ENCODE measurements at regions of chr22 and their contacts with region 1.

Region 1: DNA sequence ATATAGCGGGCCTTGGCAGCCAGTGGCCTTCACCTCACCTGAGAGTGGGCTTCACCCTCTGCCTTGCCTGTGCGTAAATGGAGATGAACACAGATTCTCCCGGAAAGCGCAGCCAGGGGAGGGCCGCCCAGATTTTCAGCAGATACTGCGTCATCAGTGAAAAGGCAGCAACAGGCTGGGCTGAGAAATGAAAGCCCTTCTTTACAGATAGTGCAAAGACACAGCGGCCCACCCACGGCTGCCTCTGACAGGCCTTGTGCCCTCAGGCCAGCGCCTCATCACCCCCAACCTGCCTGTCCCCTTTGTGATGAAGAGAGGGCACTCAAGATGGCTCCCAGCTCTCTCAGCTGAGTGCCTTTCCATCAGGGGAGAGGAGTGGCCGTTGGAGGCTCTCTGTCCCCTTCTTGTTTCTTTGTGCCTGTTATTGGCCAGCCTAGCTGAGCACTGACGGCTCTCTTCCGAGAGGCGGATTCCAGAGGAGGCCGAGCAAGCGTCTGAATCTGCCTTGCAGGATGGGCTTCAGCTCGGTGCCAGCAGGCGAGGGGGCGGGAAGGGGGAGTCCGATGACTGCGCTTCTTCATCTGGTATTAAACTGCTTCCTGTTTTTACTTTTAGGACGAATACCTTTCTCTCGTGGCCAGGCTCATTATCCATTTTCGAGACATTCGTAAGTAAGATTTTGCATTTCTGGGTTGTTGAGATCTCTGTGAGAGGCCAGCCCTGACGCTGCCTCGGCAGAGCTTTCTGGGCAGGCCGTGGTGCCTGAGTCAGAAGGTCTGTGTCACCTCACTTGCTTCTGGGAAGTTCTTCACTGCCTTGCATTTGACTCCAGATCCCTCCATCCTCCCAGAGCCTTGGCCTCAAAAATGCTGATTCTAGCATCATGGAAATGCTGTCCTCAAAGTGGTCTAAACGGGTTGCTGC is 43.7 kb downstream of the MED15 start:
- DNase-seq: peak; percentile 18
- H3K4me3 Mint-ChIP-seq: peak overlapping the region; percentile 54
- H3K27ac Mint-ChIP-seq: peak overlapping the region; percentile 94
- H3K4me1 Mint-ChIP-seq: peaks cover 66% of the 10 kb centered on the region
- H3K27me3 Mint-ChIP-seq: no peaks in the 10 kb centered on the region

Region 2: GRCh38 chr22:20523086-20523983 is 27.7 kb before region 1 on chr22:
- intact Hi-C with region 1: loop called (anchors 2 kb)
- DNase-seq: no peak
- H3K4me3 Mint-ChIP-seq: peak overlapping the region; percentile 24
- H3K27ac Mint-ChIP-seq: peak overlapping the region; percentile 77
- H3K4me1 Mint-ChIP-seq: peaks cover 54% of the 10 kb centered on the region
- H3K27me3 Mint-ChIP-seq: no peaks in the 10 kb centered on the region

Region 3: DNA sequence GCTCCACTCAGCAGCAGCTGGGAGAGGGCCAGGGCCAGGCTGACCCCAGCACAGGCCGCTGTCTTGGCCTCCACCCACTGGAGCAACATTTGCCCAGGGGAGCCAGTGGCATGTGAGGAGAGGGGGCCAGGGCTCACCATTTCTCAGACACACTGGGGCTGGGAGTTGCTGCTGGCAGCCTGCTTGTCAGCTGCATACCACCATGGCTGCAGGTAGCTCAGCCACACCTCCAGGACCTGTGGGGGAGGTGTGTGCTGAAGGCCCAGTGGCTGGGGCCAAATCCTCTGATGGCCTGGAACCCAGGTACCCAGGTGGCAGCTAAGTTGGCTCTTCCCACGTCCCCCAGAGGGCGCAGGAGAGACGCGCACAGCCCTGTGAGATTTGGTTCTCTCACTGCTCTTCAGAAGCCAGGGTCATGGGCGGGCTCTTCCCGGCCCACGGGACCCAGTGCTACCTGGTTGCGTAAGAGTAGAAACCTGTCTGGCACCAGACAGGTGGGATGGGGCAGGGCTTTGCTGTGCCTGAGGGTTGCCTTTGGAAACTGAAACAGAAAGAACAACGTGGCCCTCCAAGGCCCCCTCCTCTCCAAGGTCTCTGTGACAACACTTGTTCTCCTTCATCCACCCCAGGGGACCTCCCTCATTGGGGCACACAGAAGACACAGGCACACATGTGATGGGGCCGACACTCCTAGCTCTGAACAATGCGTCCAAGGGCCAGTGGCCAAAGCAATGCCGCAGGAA is 55.1 kb after region 1 on chr22:
- intact Hi-C with region 1: no loop called
- DNase-seq: peak; percentile 51
- H3K4me3 Mint-ChIP-seq: no peak overlapping the region
- H3K27ac Mint-ChIP-seq: no peak overlapping the region
- H3K4me1 Mint-ChIP-seq: no peaks in the 10 kb centered on the region
- H3K27me3 Mint-ChIP-seq: no peaks in the 10 kb centered on the region

Region 4: DNA sequence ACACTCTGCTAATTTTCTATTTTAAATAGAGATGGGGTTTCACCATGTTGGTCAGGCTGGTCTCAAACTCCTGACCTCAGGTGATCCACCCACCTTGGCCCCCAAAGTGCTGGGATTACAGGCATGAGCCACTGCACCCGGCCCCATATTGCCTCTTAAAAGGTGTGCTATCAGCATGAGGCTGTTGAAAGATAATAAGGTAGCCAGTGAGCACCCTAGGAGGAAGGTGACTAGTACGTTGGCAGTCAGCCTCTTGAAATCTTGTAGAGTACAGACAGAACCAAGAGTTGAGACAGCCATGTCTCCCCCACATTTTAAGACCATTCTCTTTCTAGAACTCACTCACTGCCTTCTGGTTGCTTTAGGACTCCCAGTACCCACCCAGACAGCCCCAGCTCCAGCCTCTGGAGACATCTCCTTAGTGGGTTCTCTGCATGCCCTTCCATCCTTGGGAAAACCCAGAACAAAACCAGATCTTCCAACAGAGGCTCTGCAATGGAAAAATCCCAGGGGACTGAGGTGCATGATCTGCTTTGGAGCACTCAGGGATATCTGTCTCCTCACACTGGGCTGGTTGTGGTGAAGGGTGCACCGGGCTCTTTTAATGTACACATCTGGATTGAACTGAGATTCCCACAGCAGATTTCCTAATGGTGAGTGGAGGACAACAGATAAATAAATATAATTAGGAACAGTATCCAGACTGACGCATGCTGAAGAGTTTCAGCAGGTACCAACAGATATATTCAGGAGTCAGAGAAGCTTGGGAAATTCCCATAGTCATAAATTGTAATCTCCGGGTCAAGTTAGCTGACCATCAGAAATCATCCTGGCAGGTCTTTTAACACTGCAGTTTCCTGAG is 544.1 kb after region 1 on chr22:
- intact Hi-C with region 1: no loop called
- DNase-seq: no peak
- H3K4me3 Mint-ChIP-seq: no peak overlapping the region
- H3K27ac Mint-ChIP-seq: no peak overlapping the region
- H3K4me1 Mint-ChIP-seq: no peaks in the 10 kb centered on the region
- H3K27me3 Mint-ChIP-seq: peaks cover 4% of the 10 kb centered on the region